HCT116 (cell line): ENCODE measurements at regions of chr1 and their contacts with region 1.

Region 1: GRCh38 chr1:207868774-207869721 is 41.9 kb downstream of the CD34 start:
- DNase-seq: peak; percentile 29
- ATAC-seq: peak; percentile 85
- H3K4me3 ChIP-seq: peak overlapping the region; percentile 74 to 92
- H3K27ac ChIP-seq: peak overlapping the region; percentile 49; the same call in 1 of the 2 replicates
- H3K4me1 ChIP-seq: peaks cover 2 to 20% of the 10 kb centered on the region in 2 experiments; a peak in 2 of 4 replicates
- H3K27me3 ChIP-seq: no peaks in the 10 kb centered on the region
- CTCF ChIP-seq: peak; percentile 51 to 71 (median 54); a peak in 5 of 6 replicates
- POLR2A ChIP-seq: peak; percentile 32
- RAD21 ChIP-seq: peak; percentile 44

Region 2: GRCh38 chr1:207840380-207840779 is 28.7 kb before region 1 on chr1:
- CTCF ChIA-PET with region 1: interaction called, 15 read pairs
- POLR2A ChIA-PET with region 1: no interaction called
- RAD21 ChIA-PET with region 1: no interaction called
- intact Hi-C with region 1: no loop called
- DNase-seq: no peak
- ATAC-seq: peak; percentile 78
- H3K4me3 ChIP-seq: no peak overlapping the region
- H3K27ac ChIP-seq: no peak overlapping the region
- H3K4me1 ChIP-seq: no peaks in the 10 kb centered on the region
- H3K27me3 ChIP-seq: no peaks in the 10 kb centered on the region
- CTCF ChIP-seq: no peak
- POLR2A ChIP-seq: no peak
- RAD21 ChIP-seq: no peak

Region 3: GRCh38 chr1:208409176-208409575 is 540.1 kb after region 1 on chr1:
- CTCF ChIA-PET with region 1: no interaction called
- POLR2A ChIA-PET with region 1: no interaction called
- RAD21 ChIA-PET with region 1: no interaction called
- intact Hi-C with region 1: no loop called
- DNase-seq: no peak
- ATAC-seq: no peak
- H3K4me3 ChIP-seq: no peak overlapping the region
- H3K27ac ChIP-seq: no peak overlapping the region
- H3K4me1 ChIP-seq: no peaks in the 10 kb centered on the region
- H3K27me3 ChIP-seq: peaks cover 7% of the 10 kb centered on the region; the same call in 1 of the 2 replicates
- CTCF ChIP-seq: no peak
- POLR2A ChIP-seq: no peak
- RAD21 ChIP-seq: no peak